ENCODE measurements at regions of chr14 and their contacts with region 1.

Region 1: GRCh38 chr14:20343092-20343861 is at the start of gene PARP2:
- H3K4me3 ChIP-seq: peak within 1 kb of the TSS; percentile 89
- H3K27ac ChIP-seq: peak within 1 kb of the TSS; percentile 93
- H3K4me1 ChIP-seq: 0 out of 2 replicates have a peak, but pooled peaks cover 4% of the 10 kb centered on the region
- CTCF ChIP-seq: peak; percentile 23; the same call in 1 of the 2 replicates

Region 2: DNA sequence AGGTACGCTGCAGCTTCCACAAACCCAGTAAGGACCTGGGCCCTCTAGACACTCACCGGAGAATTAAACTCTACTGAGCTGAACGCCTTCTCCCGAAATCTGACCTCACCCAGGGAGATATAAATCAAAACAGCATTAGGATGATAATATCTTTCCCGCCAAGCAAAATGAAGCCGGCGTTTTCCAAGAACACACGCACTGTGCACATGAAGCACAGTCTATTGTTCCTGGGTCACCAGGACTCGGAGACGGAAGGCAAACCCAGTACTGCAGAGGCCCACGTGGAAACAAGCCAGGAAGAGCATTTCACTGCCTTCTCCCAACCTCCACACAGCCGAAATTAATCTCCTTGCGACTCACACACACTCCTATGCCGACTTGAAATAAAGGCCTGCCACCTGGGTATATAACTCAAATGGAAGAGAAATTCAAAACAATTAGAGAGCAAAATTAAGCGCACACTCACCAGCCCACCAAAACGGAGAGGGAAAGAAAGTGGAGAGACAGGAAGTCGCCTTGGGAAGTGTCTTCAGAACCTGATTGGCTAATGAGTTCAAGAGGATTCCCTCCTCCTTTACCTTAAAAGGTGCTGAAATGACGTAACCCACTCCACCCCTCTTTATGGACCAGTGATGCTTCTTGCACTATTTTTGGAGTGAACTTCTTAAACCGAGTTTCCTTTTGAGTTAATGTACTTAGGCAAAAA is 10.3 kb before region 1 on chr14 and contains the start of gene CCNB1IP1:
- CTCF ChIA-PET with region 1: interaction called, 67 read pairs
- POLR2A ChIA-PET with region 1: interaction called, 57 read pairs
- H3K4me3 ChIP-seq: peak within 1 kb of the TSS; percentile 58
- H3K27ac ChIP-seq: peak within 1 kb of the TSS; percentile 76
- H3K4me1 ChIP-seq: peaks cover 6% of the 10 kb centered on the region
- CTCF ChIP-seq: no peak

Region 3: GRCh38 chr14:20454516-20455354 is 111.5 kb after region 1 on chr14 and contains the starts of genes APEX1 and OSGEP:
- CTCF ChIA-PET with region 1: no interaction called
- POLR2A ChIA-PET with region 1: interaction called, 51 read pairs
- H3K4me3 ChIP-seq: peak within 1 kb of the TSS; percentile 91
- H3K27ac ChIP-seq: peak within 1 kb of the TSS; percentile 87
- H3K4me1 ChIP-seq: no peaks in the 10 kb centered on the region; the same call in none of the 2 replicates
- CTCF ChIP-seq: no peak; the same call in 1 of the 2 replicates

Region 4: GRCh38 chr14:20469242-20469889 is 126.1 kb after region 1 on chr14 and contains the start of gene PNP:
- CTCF ChIA-PET with region 1: no interaction called
- POLR2A ChIA-PET with region 1: interaction called, 21 read pairs
- H3K4me3 ChIP-seq: peak within 1 kb of the TSS; percentile 71
- H3K27ac ChIP-seq: peak within 1 kb of the TSS; percentile 84
- H3K4me1 ChIP-seq: peaks cover 5% of the 10 kb centered on the region
- CTCF ChIP-seq: peak; percentile 56

Region 5: GRCh38 chr14:20682435-20683124 is 339.3 kb after region 1 on chr14:
- CTCF ChIA-PET with region 1: no interaction called
- POLR2A ChIA-PET with region 1: interaction called, 11 read pairs
- H3K4me3 ChIP-seq: peak overlapping the region; percentile 68
- H3K27ac ChIP-seq: peak overlapping the region; percentile 96
- H3K4me1 ChIP-seq: no peaks in the 10 kb centered on the region; the same call in 1 of the 2 replicates
- CTCF ChIP-seq: no peak